PC-9 (cell line): ENCODE measurements at regions of chr2 and their contacts with region 1.

Region 1: GRCh38 chr2:176814306-176815052 is 398.1 kb upstream of the HNRNPA3 start:
- DNase-seq: no peak
- H3K4me3 ChIP-seq: no peak overlapping the region
- H3K27ac ChIP-seq: no peak overlapping the region
- H3K4me1 ChIP-seq: no peaks in the 10 kb centered on the region
- H3K27me3 ChIP-seq: peaks cover 18% of the 10 kb centered on the region
- CTCF ChIP-seq: peak; percentile 87

Region 2: DNA sequence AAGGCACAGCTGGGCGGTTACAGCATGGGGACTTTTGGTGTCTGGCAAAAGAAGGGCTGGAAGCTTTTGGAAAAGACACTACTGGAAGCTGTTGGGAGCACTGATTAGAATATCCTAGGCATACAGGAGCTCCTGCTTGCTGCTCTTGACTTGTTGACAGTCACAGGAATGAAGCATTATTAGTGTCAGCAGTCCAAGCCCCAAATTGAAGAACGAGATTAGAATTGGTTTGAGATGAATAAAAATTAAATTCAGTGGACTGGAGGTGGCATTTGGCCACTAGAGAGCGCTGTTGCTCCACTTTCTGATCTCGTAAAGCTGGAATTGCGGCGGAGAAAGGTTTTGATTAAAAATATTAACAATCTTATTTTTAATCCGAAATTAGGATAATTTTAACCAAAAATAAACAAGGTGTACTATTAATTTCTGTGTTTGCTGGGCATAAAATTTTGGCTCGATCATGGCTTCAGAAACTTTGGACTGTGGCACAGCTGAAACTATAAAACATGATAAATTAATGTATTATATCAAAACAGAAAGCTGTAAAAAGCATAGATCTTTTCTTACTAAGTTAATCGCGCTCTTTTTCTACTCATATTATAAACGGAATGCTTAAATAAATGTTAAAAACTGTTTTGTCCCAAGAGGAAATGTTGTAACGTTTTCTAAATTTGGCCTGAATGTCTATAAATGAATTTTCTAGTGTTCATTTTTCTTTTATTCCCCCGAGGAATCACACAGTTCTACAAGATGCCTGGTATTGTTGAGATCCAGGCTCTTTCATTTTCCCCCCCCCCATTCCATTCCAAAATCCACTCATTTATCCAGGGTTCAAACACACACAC is 687.3 kb before region 1 on chr2:
- CTCF ChIA-PET with region 1: interaction called, 3 read pairs
- POLR2A ChIA-PET with region 1: no interaction called
- intact Hi-C with region 1: loop called (anchors 1 kb)
- DNase-seq: peak; percentile 43 to 67
- H3K4me3 ChIP-seq: 0 out of 2 replicates have a peak overlapping the region, but pooled peaks have one; percentile 3
- H3K27ac ChIP-seq: no peak overlapping the region
- H3K4me1 ChIP-seq: no peaks in the 10 kb centered on the region
- H3K27me3 ChIP-seq: peaks cover 52% of the 10 kb centered on the region
- CTCF ChIP-seq: peak; percentile 100